Left ventricle myocardium inferior (tissue), 1 donor: ENCODE measurements at regions of chr7 and their contacts with region 1.

Region 1: DNA sequence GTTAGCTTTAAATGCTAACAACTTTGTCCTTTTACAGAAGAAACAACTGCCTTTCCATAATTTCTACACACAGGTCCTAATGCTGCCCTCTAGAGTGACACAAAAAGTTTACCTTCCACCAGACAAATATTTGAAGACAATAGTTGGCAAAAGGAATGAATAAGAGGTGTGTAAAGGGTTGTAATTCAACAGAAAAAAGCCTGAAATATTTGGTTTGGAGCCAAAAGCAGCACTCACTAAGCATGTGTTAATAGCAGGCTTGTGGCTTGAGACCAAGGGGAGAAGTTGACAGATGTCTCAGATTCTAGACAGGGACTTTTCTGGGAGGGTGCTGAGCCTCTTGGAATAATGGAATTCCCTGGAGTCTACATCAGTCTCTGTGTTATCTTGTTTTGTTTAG is 156.2 kb upstream of the GALNT17 start:
- DNase-seq: no peak
- H3K4me3 ChIP-seq: no peak overlapping the region
- H3K27ac ChIP-seq: no peak overlapping the region
- H3K4me1 ChIP-seq: no peaks in the 10 kb centered on the region
- H3K27me3 ChIP-seq: peaks cover 18% of the 10 kb centered on the region
- CTCF ChIP-seq: no peak

Region 2: DNA sequence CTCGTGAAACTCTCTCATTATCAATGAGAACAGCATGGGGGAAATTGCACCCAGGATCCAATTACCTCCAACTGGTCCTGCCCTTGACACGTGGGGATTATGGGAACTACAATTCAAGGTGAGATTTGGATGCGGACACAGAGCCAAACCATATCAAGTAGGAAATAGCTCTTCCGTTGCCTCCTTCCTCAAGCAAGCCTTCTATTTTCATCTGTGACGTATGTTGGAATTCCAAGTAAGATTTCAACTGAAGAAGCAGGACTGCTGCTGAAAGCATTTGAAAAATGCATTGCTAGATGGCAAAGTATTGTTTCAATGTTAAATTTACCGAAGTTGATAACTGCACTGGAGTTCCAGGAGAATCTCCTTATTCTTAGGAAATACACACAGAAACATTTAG is 22.0 kb before region 1 on chr7:
- intact Hi-C with region 1: loop called (anchors 2 kb)
- DNase-seq: no peak
- H3K4me3 ChIP-seq: no peak overlapping the region
- H3K27ac ChIP-seq: no peak overlapping the region
- H3K4me1 ChIP-seq: no peaks in the 10 kb centered on the region
- H3K27me3 ChIP-seq: peaks cover 7% of the 10 kb centered on the region
- CTCF ChIP-seq: no peak